Ascending aorta (tissue), 2 donors: ENCODE measurements at regions of chr2 and their contacts with region 1.

Region 1: DNA sequence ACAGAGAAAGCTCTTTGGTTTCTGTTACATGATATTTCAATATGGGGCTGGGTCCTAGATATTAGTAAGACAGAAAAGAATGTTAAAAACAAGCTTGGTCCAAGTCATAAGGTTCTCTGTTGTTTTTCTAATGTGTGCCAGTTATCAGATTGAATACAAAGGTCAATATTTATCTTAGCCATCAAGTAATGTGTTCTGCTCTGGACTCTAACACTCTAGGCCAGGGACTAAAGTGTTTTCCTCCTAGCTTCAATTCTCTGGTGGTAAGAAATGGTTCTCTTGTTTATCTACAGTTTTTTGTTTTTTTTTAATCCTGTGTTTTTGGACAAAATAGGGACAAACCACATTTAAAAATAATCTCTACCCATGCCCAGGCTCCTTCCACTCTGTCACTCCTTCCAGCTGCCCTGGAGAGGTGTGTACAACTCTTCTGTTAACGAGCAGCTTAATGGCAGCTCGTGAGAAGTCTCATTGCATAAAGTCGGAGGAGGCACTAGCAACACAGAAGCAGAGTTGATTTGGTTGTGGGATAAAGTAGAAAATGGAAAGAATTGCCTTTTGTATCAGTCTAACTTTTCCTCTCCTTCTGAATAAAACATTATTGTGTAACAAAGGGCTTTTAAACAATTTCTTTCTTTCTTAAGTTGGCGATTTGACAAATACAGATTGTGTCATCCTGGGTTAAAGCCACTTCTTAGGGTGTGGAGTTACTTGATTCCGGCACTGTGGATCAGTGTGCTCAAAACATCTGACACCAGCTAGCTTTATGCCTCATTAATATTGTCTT is 8.0 kb upstream of the SESTD1 start:
- DNase-seq: no peak
- H3K4me3 ChIP-seq: no peak overlapping the region
- H3K27ac ChIP-seq: peak overlapping the region; percentile 79 to 81
- H3K4me1 ChIP-seq: peaks cover 0 to 28% of the 10 kb centered on the region in 2 donors
- H3K27me3 ChIP-seq: no peaks in the 10 kb centered on the region
- CTCF ChIP-seq: no peak

Region 2: DNA sequence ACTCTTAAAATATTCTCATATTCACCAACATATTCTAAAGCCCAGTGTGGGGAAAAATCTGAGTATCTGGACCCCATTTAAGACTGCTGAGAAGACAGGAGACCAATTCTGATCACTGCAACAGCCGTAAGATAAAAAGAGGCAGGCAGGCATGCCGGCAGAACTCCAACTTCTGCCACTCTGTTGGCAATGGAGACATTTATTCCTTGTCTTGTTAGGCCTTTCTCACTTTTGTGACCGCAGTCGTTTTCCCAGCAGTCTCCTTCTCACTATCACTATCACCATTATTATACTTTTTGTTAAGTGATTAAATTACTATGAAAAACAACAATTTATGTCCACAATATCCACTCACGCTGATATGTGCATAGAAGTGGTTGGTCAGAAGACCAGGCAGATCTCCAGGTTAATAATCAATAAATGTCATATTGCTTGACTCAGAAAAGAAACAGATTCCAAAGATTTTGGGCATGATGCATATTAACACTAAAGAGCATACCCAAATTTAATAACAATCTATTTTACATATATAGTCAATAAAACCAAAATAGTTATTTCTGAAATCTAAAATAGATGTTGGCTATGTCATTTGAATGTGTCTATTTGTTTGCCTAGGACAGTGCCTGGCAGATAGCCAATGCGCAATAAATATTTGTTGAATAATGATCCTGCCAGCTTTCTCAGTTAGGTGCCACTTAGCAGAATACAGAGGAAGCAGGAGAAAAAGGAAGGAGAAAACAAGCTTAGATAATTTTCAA is 46.2 kb before region 1 on chr2:
- intact Hi-C with region 1: loop called (anchors 5 kb)
- DNase-seq: no peak
- H3K4me3 ChIP-seq: no peak overlapping the region
- H3K27ac ChIP-seq: no peak overlapping the region
- H3K4me1 ChIP-seq: peaks cover 0 to 44% of the 10 kb centered on the region in 2 donors
- H3K27me3 ChIP-seq: no peaks in the 10 kb centered on the region
- CTCF ChIP-seq: no peak

Region 3: DNA sequence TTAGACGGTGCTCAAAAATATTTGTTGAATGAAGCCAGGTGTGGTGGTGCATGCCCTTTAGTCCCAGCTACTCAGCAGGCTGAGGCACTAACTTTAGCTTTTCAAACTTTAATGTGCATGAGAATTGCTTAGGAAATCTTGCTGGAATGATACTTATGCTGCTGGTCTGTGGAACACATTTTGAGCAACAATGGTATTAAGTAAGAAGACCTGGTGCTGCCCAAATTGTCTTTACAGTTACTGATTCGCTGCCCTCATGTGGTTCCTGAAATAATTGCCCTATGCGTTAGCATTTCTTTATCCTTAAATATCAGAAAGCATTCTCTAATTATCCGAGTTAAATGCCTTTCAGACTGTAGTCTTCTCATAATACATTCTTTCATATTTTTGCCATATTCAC is 68.1 kb after region 1 on chr2:
- intact Hi-C with region 1: loop called (anchors 2 kb)
- DNase-seq: no peak
- H3K4me3 ChIP-seq: no peak overlapping the region
- H3K27ac ChIP-seq: peak overlapping the region in 1 of 2 donors; percentile 4
- H3K4me1 ChIP-seq: peaks cover 4 to 25% of the 10 kb centered on the region in 2 donors
- H3K27me3 ChIP-seq: no peaks in the 10 kb centered on the region
- CTCF ChIP-seq: peak in 1 of 3 experiments; percentile 6

Region 4: DNA sequence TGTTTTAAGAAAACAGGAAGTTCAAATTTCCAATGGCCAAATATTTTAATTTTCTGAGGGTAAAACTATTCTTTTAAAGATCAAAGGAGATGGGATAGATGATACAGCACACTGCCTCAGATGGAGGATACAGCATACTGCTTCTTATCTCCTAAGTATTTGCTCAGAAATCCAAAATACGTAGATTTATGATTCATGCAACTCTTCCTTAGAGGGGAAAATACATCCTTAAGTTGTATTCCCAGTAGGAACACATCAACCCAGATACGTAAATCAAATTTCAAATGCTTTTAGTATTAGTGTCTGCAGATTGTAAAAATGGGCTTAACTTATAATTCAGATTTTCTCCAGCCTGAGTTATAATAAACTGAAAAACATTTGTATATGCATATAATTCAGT is 353.7 kb after region 1 on chr2:
- intact Hi-C with region 1: no loop called
- DNase-seq: no peak
- H3K4me3 ChIP-seq: no peak overlapping the region
- H3K27ac ChIP-seq: no peak overlapping the region
- H3K4me1 ChIP-seq: no peaks in the 10 kb centered on the region
- H3K27me3 ChIP-seq: no peaks in the 10 kb centered on the region
- CTCF ChIP-seq: no peak